K562 (cell line): ENCODE measurements at regions of chr3 and their contacts with region 1.

Region 1: GRCh38 chr3:184380191-184380626 is 355 bp downstream of the CHRD start:
- DNase-seq: peak; percentile 66 to 87 (median 83)
- ATAC-seq: peak; percentile 44; the same call in 2 of the 3 replicates
- H3K4me3 ChIP-seq: peak overlapping the region; percentile 35
- H3K27ac ChIP-seq: no peak overlapping the region
- H3K4me1 ChIP-seq: peaks cover 5 to 34% of the 10 kb centered on the region in 2 experiments; a peak in 4 of 5 replicates
- H3K27me3 ChIP-seq: peaks cover 18 to 42% of the 10 kb centered on the region in 2 experiments
- CTCF ChIP-seq: no peak
- EP300 ChIP-seq: no peak
- POLR2A ChIP-seq: no peak
- RAD21 ChIP-seq: no peak

Region 2: DNA sequence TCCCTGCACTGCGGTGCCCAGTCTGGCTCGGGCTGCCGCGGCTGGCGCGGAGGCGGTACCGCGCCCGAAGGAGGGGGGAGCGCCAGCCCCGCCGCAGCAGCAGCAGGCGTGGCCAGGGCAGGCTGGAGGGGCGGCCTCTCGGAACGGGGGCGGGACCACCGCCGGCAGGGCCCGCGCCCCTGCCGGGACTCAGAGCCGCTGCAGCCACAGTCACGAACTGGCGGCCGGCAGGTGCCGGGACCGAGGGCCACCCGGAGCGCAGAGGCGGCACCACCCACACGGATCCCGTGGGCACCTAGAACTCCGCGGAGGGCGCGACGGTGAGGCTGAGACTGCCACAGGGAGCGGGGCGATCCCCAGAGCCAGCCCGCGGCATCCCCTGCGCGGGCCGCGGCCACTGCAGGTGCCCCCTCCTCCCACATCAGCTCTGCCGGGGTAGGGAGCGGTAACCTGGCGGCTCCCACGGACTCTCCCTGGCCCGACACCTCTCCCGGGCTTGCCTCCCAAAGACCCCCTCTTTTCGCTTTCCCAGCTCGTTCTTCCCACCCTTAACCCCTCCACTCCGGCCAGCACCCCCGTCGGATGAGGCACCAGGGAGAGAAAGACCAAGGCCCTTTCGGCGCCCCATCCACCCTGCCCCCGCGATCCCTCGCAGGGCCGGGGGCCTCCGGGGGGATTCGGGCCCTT is 150.7 kb before region 1 on chr3 and contains the start of gene VWA5B2:
- CTCF ChIA-PET with region 1: no interaction called
- POLR2A ChIA-PET with region 1: no interaction called
- in situ Hi-C with region 1: no loop called
- intact Hi-C with region 1: no loop called
- DNase-seq: peak; percentile 66 to 96 (median 92)
- ATAC-seq: peak; percentile 92
- H3K4me3 ChIP-seq: no peak within 1 kb of the TSS
- H3K27ac ChIP-seq: no peak within 1 kb of the TSS
- H3K4me1 ChIP-seq: peaks cover 0 to 32% of the 10 kb centered on the region in 2 experiments; a peak in 3 of 5 replicates
- H3K27me3 ChIP-seq: peaks cover 47 to 68% of the 10 kb centered on the region in 2 experiments
- CTCF ChIP-seq: peak in 1 of 3 experiments; percentile 43; a peak in 1 of 6 replicates
- EP300 ChIP-seq: no peak
- POLR2A ChIP-seq: no peak
- RAD21 ChIP-seq: no peak
- polyA plus RNA-seq, gene VWA5B2: not detected

Region 3: GRCh38 chr3:184417619-184418327 is 37.6 kb after region 1 on chr3:
- CTCF ChIA-PET with region 1: no interaction called
- POLR2A ChIA-PET with region 1: no interaction called
- in situ Hi-C with region 1: no loop called
- intact Hi-C with region 1: no loop called
- DNase-seq: peak; percentile 70 to 83 (median 78)
- ATAC-seq: peak; percentile 98
- H3K4me3 ChIP-seq: no peak overlapping the region
- H3K27ac ChIP-seq: no peak overlapping the region
- H3K4me1 ChIP-seq: no peaks in the 10 kb centered on the region
- H3K27me3 ChIP-seq: peaks cover 0 to 34% of the 10 kb centered on the region in 2 experiments; a peak in 3 of 5 replicates
- CTCF ChIP-seq: peak; percentile 88 to 92 (median 89)
- EP300 ChIP-seq: no peak
- POLR2A ChIP-seq: no peak
- RAD21 ChIP-seq: peak; percentile 62 to 89

Region 4: GRCh38 chr3:184711493-184712247 is 331.5 kb after region 1 on chr3 and contains the start of gene MAGEF1:
- CTCF ChIA-PET with region 1: no interaction called
- POLR2A ChIA-PET with region 1: interaction called, 3 read pairs
- in situ Hi-C with region 1: no loop called
- intact Hi-C with region 1: loop called (anchors 10 kb)
- DNase-seq: peak; percentile 81 to 93 (median 86)
- ATAC-seq: peak; percentile 96
- H3K4me3 ChIP-seq: peak within 1 kb of the TSS; percentile 79
- H3K27ac ChIP-seq: peak within 1 kb of the TSS; percentile 75
- H3K4me1 ChIP-seq: peaks cover 6 to 17% of the 10 kb centered on the region in 2 experiments
- H3K27me3 ChIP-seq: no peaks in the 10 kb centered on the region
- CTCF ChIP-seq: 0 out of 6 replicates have a peak, but pooled peaks of 1 of the 3 experiments have one; percentile 8
- EP300 ChIP-seq: no peak
- POLR2A ChIP-seq: peak; percentile 91
- RAD21 ChIP-seq: no peak
- polyA plus RNA-seq, gene MAGEF1: 1.5 to 2.5 TPM